Endothelial cell of umbilical vein (primary cell): ENCODE measurements at regions of chr3 and their contacts with region 1.

Region 1: DNA sequence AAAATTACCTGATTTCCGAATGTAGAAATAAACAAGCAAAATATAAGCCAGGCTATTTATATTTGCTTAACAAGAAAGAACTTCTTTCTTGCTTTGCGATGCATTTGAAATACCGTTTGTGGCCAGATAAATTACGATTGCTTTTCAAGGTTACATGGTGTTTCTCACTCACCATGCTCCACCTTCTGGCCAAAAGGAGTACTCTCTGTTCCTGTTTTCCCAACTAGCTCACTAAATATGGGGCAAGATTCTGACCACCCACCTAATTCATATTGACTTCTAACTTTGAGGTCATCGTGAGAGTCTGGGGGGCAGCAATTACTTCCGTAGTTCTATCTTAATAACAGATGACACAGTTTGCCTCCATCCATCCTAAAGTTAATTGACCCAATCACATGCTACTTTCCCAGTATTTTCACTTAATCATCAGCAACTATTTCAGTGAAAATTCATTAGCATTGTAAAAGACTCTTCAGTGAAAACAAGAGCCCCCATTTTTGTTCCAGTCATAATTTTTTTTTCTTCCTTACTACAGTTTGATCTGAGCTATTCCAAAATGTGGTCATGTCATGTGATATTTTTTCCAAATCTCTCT is 25.9 kb downstream of the ACP3 start:
- DNase-seq: peak; percentile 56
- H3K4me3 ChIP-seq: no peak overlapping the region
- H3K27ac ChIP-seq: no peak overlapping the region
- H3K4me1 ChIP-seq: no peaks in the 10 kb centered on the region
- H3K27me3 ChIP-seq: peaks cover 10 to 17% of the 10 kb centered on the region in 2 experiments
- CTCF ChIP-seq: peak; percentile 57 to 69
- POLR2A ChIP-seq: no peak

Region 2: DNA sequence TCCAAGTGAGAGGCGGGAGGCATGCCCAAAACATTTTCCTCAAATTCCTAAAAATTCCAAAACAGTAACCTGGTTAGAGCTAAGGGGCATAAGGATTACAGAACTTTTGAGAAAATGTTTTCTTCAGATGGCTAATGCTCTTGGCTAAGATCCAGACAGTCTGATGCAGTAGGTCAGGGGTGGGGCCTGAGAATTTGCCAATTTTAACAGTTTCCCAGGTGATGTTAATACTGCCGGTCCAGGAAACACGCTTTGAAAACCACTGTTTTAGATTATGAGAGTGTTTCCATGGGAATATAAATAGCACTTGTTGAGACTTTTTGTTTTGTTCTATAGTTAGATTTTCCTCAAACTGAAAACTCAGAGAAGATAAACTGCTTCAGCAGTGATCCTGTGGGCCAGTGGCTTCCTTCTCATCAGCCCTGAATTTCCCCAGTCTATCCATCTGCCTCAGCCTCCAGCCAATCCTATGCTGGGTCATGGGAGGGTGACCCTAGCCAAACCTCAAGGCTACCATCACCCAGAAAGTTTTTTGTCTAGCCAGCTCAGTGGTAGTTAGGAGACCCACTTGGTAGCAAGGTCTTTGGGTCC is 97.5 kb before region 1 on chr3:
- CTCF ChIA-PET with region 1: interaction called, 27 read pairs
- POLR2A ChIA-PET with region 1: no interaction called
- dilution Hi-C with region 1: no loop called
- intact Hi-C with region 1: no loop called
- DNase-seq: no peak
- H3K4me3 ChIP-seq: no peak overlapping the region
- H3K27ac ChIP-seq: no peak overlapping the region
- H3K4me1 ChIP-seq: no peaks in the 10 kb centered on the region
- H3K27me3 ChIP-seq: peaks cover 0 to 7% of the 10 kb centered on the region in 2 experiments
- CTCF ChIP-seq: no peak
- POLR2A ChIP-seq: no peak

Region 3: DNA sequence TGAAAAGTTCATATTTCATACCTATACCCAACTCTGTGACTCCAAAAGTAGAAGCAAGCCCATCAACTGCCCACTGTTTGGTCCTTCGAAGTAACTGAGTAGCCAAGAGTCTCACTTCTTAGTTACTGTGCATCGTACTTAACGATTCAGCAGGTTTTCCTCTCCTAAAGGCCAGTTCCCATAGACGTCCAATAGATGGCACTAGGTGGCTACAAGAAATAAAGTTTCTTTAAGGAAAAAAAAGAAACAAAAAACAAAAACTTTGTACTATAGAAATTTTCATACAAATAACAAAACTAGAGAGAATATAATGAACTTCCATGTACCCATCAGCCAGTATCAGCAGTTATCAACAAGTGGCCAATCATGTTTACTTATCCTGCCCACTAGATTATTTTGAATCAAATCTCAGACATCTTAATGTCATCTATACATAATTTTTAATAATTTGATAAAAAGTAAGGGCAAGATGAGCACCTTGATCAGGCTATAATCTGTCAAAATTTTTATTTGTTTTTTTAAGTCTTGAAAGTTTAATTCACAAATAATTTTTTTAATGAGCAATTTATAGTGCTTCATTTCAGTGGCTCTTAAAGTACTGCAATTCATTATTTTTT is 89.7 kb before region 1 on chr3:
- CTCF ChIA-PET with region 1: interaction called, 77 read pairs
- POLR2A ChIA-PET with region 1: no interaction called
- dilution Hi-C with region 1: no loop called
- intact Hi-C with region 1: loop called (anchors 1 kb)
- DNase-seq: peak; percentile 63
- H3K4me3 ChIP-seq: no peak overlapping the region
- H3K27ac ChIP-seq: no peak overlapping the region
- H3K4me1 ChIP-seq: no peaks in the 10 kb centered on the region
- H3K27me3 ChIP-seq: peaks cover 0 to 3% of the 10 kb centered on the region in 2 experiments
- CTCF ChIP-seq: peak; percentile 57 to 64
- POLR2A ChIP-seq: no peak

Region 4: GRCh38 chr3:132268956-132269355 is 74.2 kb before region 1 on chr3:
- CTCF ChIA-PET with region 1: interaction called, 13 read pairs
- POLR2A ChIA-PET with region 1: no interaction called
- dilution Hi-C with region 1: no loop called
- intact Hi-C with region 1: no loop called
- DNase-seq: peak; percentile 10
- H3K4me3 ChIP-seq: no peak overlapping the region
- H3K27ac ChIP-seq: no peak overlapping the region
- H3K4me1 ChIP-seq: no peaks in the 10 kb centered on the region
- H3K27me3 ChIP-seq: no peaks in the 10 kb centered on the region
- CTCF ChIP-seq: peak in 1 of 2 donors; percentile 44
- POLR2A ChIP-seq: no peak

Region 5: GRCh38 chr3:132284781-132285619 is 58.1 kb before region 1 on chr3:
- CTCF ChIA-PET with region 1: interaction called, 4 read pairs
- POLR2A ChIA-PET with region 1: no interaction called
- dilution Hi-C with region 1: no loop called
- intact Hi-C with region 1: loop called (anchors 2 kb)
- DNase-seq: no peak
- H3K4me3 ChIP-seq: no peak overlapping the region
- H3K27ac ChIP-seq: no peak overlapping the region
- H3K4me1 ChIP-seq: no peaks in the 10 kb centered on the region
- H3K27me3 ChIP-seq: peaks cover 0 to 6% of the 10 kb centered on the region in 2 experiments
- CTCF ChIP-seq: no peak
- POLR2A ChIP-seq: no peak